Cardiac septum (tissue), 1 donor: ENCODE measurements at regions of chr3 and their contacts with region 1.

Region 1: DNA sequence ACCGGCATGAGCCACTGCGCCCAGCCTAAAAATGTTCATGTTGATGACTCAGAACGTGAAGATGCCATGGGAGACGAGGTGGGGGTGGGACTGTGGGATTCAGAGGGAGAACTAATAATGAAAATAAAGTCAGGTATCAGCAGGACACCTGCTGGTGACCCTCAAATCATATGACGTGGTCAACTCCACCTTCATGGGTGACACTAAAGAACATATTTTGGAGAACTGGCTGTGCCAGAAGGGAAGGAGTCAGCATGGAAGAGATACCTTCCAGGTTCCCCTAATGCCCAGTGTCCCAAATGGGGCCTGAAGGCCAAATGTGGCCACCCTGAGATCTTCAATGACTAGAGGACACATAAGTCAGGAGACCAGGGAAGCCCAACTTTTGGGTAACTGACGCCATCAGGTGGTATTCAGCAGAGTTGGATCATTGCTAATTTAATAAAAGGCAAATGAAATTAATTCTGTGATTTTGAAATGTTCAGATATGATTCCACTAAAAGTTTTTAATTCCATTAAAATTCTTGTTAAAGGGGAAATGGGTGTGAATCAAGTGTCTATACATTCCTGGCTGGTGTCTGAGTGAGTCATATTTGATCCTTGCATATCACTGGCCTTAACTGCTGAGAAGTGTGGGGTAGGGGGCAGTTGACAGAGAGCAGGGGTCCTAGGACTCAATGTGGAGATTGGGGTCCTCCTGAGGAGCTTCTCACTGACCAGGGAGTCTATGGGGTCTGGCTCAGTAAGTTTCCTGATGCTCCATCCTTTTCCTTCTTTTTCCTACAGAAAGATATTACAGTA is 88.7 kb upstream of the GSK3B start:
- DNase-seq: no peak

Region 2: DNA sequence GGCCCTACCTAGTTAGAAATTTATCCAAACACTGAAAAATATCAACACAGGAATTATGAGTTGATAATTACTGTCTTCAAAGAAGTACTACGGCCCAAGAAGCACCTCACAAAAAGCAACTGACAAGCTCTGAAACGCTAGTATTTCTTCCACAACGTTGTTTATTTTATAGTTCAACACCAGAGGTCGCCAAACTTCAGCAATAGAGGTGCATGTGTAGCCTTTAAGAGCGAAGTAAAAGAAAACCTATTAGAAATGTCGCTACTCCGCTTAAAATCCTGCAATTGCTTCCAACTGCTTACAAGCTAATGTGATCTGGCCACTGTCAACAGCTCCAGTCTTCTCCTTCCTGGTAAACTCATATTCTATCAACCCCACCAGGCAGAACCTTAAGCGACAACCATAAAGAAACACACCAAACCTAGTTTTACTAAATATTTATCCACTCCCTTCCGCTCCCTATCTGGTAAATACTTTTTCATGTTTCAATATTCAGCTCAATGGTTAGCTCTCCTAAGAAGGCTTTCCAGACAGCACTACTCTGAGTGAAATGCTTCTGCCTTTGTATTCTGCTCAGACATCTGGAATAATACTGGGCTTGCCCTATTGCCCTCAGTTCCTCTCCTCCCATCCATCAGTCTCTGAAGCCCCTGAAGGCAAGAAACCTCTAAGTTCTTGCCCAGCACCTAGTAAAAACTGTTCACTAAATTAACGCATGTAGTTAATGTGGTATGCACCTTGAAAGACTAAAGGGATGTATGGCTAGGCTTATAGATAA is 290.8 kb before region 1 on chr3:
- intact Hi-C with region 1: loop called (anchors 5 kb)
- DNase-seq: no peak

Region 3: DNA sequence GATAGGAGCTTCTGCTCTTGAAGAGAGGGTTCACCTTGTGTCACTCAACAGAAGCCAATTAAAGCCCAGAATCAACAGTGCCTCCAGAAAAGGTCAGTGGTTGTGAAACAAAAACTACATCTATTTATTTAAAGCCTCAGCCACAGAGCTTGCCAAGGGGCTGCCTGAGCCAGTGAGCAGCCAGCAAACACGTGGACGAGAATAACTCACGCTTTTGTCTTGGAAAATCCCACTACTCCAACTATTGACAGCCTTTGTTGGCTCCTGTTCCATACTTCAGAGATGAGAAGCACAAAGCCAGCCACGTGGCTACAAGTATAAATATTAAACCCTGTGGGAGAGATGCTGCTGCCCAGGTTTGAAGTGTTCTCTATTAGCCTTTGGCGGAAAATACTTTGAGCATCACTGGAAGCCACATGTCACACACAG is 91.8 kb after region 1 on chr3:
- intact Hi-C with region 1: no loop called
- DNase-seq: no peak